Activated T-helper 2 cell treated with anti-CD3 and anti-CD28 coated beads, Interferon-gamma antibody, Interleukin-2, Interleukin-4, amounts not matched to agents 10 μg/mL and 5 μg/mL and 100 μg/mL, durations not matched to agents 14 hours and 24 hours and 36 hours (primary cell): ENCODE measurements at regions of chr19 and their contacts with region 1.

Region 1: GRCh38 chr19:51108066-51108804 is at the start of gene CTU1:
- DNase-seq: peak; percentile 99
- H3K4me3 Mint-ChIP-seq: peak within 1 kb of the TSS; percentile 84
- H3K27ac Mint-ChIP-seq: peak within 1 kb of the TSS; percentile 82
- H3K4me1 Mint-ChIP-seq: peaks cover 19% of the 10 kb centered on the region
- H3K27me3 Mint-ChIP-seq: no peaks in the 10 kb centered on the region
- total RNA-seq, gene CTU1: 9.7 and 11.0 TPM in 2 replicates

Region 2: GRCh38 chr19:51138549-51138979 is 30.3 kb after region 1 on chr19:
- intact Hi-C with region 1: no loop called
- DNase-seq: no peak
- H3K4me3 Mint-ChIP-seq: no peak overlapping the region
- H3K27ac Mint-ChIP-seq: no peak overlapping the region
- H3K4me1 Mint-ChIP-seq: peaks cover 5% of the 10 kb centered on the region
- H3K27me3 Mint-ChIP-seq: peaks cover 22% of the 10 kb centered on the region

Region 3: DNA sequence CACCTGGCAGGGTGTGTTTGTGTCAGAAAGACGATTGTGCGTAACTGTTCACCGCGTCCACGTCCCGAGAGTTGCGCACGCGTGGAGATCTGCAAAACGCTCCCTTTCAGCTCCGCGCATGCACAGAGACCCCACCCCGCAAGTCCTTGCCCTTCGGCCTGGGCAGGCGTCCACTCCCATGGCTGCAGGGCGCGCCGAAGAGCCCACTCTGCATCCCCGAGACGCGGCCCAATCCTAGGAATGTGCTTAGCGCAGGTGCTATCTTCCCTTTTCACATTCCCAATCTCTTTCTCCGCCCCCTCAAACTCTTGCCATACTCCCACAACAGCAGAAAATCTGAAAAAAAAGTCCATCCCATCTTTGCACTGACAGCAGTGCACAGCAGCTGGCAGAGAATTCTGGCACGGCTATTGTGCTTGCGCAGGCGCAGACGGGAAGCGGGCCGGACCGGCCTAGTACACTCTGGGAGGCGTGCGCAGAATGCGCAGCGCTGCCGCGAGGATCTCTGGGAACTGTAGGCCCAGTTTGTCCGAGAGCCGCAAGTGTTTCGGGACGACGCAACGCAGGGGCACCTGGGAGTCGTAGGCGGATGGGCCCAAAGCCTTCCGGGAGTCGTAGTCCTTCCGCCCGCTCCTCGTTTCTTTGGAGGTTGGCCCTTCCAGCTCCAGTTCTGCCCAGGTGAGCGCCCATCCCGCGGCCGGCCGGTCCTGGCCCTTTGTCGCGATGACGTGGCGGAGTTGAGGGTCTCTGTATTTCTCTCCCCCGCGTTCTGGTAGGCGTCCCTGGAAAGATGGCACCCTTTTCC is 485.9 kb after region 1 on chr19:
- intact Hi-C with region 1: loop called (anchors 5 kb)
- DNase-seq: peak; percentile 95
- H3K4me3 Mint-ChIP-seq: peak overlapping the region; percentile 89
- H3K27ac Mint-ChIP-seq: peak overlapping the region; percentile 80
- H3K4me1 Mint-ChIP-seq: peaks cover 20% of the 10 kb centered on the region
- H3K27me3 Mint-ChIP-seq: peaks cover 6% of the 10 kb centered on the region